CD4-positive, alpha-beta T cell (primary cell): ENCODE measurements at regions of chr5 and their contacts with region 1.

Region 1: DNA sequence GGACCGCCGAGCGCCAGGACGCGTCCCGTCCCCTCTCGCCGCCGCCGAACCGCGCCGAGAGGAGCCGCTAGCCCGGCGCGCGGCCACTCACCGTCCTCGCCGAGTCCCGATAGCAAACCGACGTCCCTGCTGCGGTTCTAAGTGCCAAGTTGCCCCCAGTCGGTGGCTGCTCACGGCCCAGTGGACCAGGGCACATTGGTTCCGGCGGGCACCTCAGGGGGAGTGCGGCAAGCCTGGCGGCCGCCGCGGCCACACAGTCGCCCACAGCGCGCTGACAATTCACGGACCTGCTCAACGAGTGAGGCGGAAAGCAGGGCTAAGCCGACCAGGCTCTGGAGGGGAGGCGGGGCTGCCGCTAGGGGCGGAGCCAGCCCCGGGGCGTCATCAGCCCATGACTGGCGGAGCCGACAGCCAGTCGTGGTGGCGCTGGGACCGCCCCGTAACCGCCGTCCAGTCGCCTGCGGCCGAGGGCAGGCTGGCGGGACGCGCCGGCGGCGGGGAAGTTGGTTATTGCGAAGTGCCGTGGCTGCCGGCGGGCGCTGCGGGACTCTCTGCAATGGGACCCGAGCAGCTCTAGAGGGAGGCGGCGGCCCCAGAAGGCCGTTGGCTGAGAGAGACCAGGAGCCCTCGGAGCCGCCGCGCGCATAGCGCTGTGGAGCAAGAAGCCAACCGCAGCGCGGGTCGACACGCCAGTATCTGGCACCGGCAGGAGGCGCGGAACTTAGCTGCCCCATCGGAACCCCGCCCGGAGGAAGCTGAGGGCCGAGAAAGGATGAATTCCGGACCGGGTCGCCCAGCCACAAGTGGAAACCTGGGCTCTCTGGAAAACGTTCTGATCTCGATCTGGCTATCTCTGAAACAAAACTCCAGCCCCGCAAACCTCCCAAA is at the start of gene MARCHF3:
- DNase-seq: peak; percentile 80 to 98 (median 92)
- ATAC-seq: peak; percentile 94
- H3K4me3 ChIP-seq: peak within 1 kb of the TSS; percentile 93
- H3K4me3 Mint-ChIP-seq: peak within 1 kb of the TSS; percentile 97
- H3K27ac ChIP-seq: peak within 1 kb of the TSS; percentile 9 to 63
- H3K27ac Mint-ChIP-seq: peak within 1 kb of the TSS; percentile 77
- H3K4me1 ChIP-seq: peaks cover 24% of the 10 kb centered on the region
- H3K4me1 Mint-ChIP-seq: peaks cover 21% of the 10 kb centered on the region
- H3K27me3 ChIP-seq: no peaks in the 10 kb centered on the region
- H3K27me3 Mint-ChIP-seq: peaks cover 12% of the 10 kb centered on the region
- CTCF ChIP-seq: peak; percentile 23
- total RNA-seq, gene MARCHF3: 5.2 to 6.2 TPM

Region 2: DNA sequence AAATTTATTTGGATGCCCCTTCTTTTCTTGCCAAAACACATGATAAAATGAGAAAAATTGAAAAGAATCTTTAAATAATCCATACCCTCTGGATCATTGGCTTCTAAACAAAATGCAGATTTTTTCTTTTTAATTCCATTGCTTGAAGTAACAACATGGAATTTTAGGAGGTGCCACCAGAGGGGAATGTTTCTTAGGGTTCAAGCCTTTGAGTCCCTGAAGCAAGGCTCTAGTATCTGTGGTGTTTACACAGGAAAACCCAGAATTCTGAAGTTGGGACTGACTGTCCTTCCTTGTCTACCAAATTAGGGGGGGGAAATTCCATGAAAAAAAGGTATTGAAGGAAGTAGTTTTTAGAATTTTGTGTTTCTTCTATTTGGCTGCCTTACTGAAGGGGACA is 184.2 kb before region 1 on chr5:
- CTCF ChIA-PET with region 1: no interaction called
- POLR2A ChIA-PET with region 1: interaction called, 18 read pairs
- intact Hi-C with region 1: loop called (anchors 2 to 5 kb)
- DNase-seq: no peak
- ATAC-seq: no peak
- H3K4me3 ChIP-seq: no peak overlapping the region
- H3K4me3 Mint-ChIP-seq: no peak overlapping the region
- H3K27ac ChIP-seq: peak overlapping the region in 1 of 2 donors; percentile 24
- H3K27ac Mint-ChIP-seq: peak overlapping the region; percentile 90
- H3K4me1 ChIP-seq: peaks cover 13% of the 10 kb centered on the region
- H3K4me1 Mint-ChIP-seq: peaks cover 37% of the 10 kb centered on the region
- H3K27me3 ChIP-seq: no peaks in the 10 kb centered on the region
- H3K27me3 Mint-ChIP-seq: no peaks in the 10 kb centered on the region
- CTCF ChIP-seq: no peak

Region 3: GRCh38 chr5:126972062-126972895 is 58.2 kb before region 1 on chr5:
- CTCF ChIA-PET with region 1: no interaction called
- POLR2A ChIA-PET with region 1: interaction called, 4 read pairs
- intact Hi-C with region 1: loop called in 1 of 2 experiments (anchors 2 kb)
- DNase-seq: peak in 8 of 14 experiments; percentile 1 to 68 (median 31)
- ATAC-seq: peak; percentile 71
- H3K4me3 ChIP-seq: peak overlapping the region; percentile 35
- H3K4me3 Mint-ChIP-seq: peak overlapping the region; percentile 81
- H3K27ac ChIP-seq: peak overlapping the region; percentile 21 to 55
- H3K27ac Mint-ChIP-seq: peak overlapping the region; percentile 76
- H3K4me1 ChIP-seq: peaks cover 10% of the 10 kb centered on the region
- H3K4me1 Mint-ChIP-seq: peaks cover 45% of the 10 kb centered on the region
- H3K27me3 ChIP-seq: no peaks in the 10 kb centered on the region
- H3K27me3 Mint-ChIP-seq: no peaks in the 10 kb centered on the region
- CTCF ChIP-seq: no peak

Region 4: GRCh38 chr5:127072861-127073846 is 42.7 kb after region 1 on chr5 and contains the start of gene C5orf63:
- CTCF ChIA-PET with region 1: interaction called, 3 read pairs
- POLR2A ChIA-PET with region 1: interaction called, 18 read pairs
- intact Hi-C with region 1: loop called (anchors 2 to 5 kb)
- DNase-seq: peak; percentile 31 to 84 (median 56)
- ATAC-seq: peak; percentile 93
- H3K4me3 ChIP-seq: peak within 1 kb of the TSS; percentile 62
- H3K4me3 Mint-ChIP-seq: peak within 1 kb of the TSS; percentile 92
- H3K27ac ChIP-seq: peak within 1 kb of the TSS in 1 of 2 donors; percentile 4
- H3K27ac Mint-ChIP-seq: peak within 1 kb of the TSS; percentile 85
- H3K4me1 ChIP-seq: peaks cover 10% of the 10 kb centered on the region
- H3K4me1 Mint-ChIP-seq: peaks cover 34% of the 10 kb centered on the region
- H3K27me3 ChIP-seq: no peaks in the 10 kb centered on the region
- H3K27me3 Mint-ChIP-seq: no peaks in the 10 kb centered on the region
- CTCF ChIP-seq: no peak
- total RNA-seq, gene C5orf63: 5.1 to 5.7 TPM